Activated CD4-positive, alpha-beta T cell treated with anti-CD3 and anti-CD28 coated beads for 36 hours (primary cell): ENCODE measurements at regions of chr12 and their contacts with region 1.

Region 1: DNA sequence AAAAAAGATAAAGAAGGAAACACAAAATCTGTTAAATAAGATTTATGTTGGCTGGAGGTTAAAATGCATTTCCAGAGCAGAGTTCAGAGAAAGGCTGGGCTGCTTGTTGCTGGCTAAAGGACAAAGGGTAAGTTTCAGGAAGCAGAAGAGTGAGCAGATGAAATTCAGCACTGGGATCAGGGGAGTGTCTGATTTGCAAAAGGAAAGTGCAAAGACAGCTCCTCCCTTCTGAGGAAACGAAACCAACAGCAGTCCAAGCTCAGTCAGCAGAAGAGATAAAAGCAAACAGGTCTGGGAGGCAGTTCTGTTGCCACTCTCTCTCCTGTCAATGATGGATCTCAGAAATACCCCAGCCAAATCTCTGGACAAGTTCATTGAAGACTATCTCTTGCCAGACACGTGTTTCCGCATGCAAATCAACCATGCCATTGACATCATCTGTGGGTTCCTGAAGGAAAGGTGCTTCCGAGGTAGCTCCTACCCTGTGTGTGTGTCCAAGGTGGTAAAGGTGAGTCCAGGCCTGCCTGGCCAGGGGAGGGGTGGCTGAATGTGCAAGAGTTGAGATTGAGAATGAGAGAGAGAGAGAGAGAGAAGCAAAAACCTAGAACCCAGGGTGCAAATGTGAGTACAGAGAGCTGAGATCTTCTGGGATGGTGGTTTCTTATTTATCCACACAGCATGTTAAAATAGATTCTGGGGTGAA is at the start of gene OAS1:
- DNase-seq: peak; percentile 55
- ATAC-seq: peak; percentile 85
- H3K4me3 Mint-ChIP-seq: peak within 1 kb of the TSS; percentile 85
- H3K27ac Mint-ChIP-seq: peak within 1 kb of the TSS; percentile 95
- H3K4me1 Mint-ChIP-seq: peaks cover 56% of the 10 kb centered on the region
- H3K27me3 Mint-ChIP-seq: no peaks in the 10 kb centered on the region
- total RNA-seq, gene OAS1: 50.5 to 52.8 TPM

Region 2: GRCh38 chr12:112937741-112938719 is 31.2 kb after region 1 on chr12 and contains the start of gene OAS3:
- CTCF ChIA-PET with region 1: interaction called, 5 read pairs
- POLR2A ChIA-PET with region 1: no interaction called
- intact Hi-C with region 1: loop called (anchors 2 kb)
- DNase-seq: peak; percentile 76
- ATAC-seq: peak; percentile 61
- H3K4me3 Mint-ChIP-seq: peak within 1 kb of the TSS; percentile 78
- H3K27ac Mint-ChIP-seq: peak within 1 kb of the TSS; percentile 89
- H3K4me1 Mint-ChIP-seq: peaks cover 37% of the 10 kb centered on the region
- H3K27me3 Mint-ChIP-seq: no peaks in the 10 kb centered on the region
- total RNA-seq, gene OAS3: 32.1 to 35.3 TPM